ENCODE measurements at regions of chr2 and their contacts with region 1.

Region 1: GRCh38 chr2:96739633-96740428 is at the start of gene LMAN2L:
- DNase-seq: peak; percentile 94 to 99 (median 98)
- H3K4me3 ChIP-seq: peak within 1 kb of the TSS; percentile 63 to 82
- H3K4me3 Mint-ChIP-seq: peak within 1 kb of the TSS; percentile 93 to 100 (median 98)
- H3K27ac ChIP-seq: peak within 1 kb of the TSS; percentile 75
- H3K27ac Mint-ChIP-seq: peak within 1 kb of the TSS; percentile 90 to 98 (median 97)
- H3K4me1 ChIP-seq: peaks cover 36% of the 10 kb centered on the region
- H3K4me1 Mint-ChIP-seq: peaks cover 24 to 53% (median 39%) of the 10 kb centered on the region in 4 donors
- H3K27me3 ChIP-seq: no peaks in the 10 kb centered on the region
- H3K27me3 Mint-ChIP-seq: no peaks in the 10 kb centered on the region
- total RNA-seq, gene LMAN2L: 10.1 to 12.6 TPM

Region 2: DNA sequence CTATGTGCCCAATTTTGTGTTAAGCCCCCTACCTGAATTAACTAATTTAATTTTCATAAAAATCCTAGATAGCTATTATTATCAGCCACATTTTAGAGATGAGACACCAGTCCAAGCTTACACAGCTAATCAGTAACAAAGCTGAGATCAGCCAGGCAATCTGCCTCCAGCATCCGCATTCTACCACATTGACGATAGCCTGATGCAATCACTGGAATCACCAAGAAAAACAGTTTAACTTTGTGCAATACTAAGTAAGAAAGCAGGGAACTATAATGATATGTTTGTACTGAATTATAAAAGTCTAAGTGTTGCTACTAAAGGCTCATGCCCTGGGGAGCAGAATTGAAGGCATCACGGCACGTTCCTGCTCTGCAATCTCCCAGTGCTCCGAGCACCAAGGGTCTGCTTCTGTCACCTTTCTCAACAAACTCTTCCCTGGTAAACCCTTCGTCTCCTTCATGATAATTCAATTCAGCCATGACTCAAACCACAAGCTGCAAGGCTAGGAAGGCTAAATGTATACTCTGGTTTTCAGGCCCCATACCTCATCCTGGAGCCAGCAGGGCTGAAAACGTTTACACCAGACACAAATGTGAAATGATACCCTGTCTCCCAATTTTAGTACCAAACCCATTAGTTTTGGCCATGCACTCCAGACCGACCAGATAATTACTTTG is 121.1 kb before region 1 on chr2:
- CTCF ChIA-PET with region 1: no interaction called
- POLR2A ChIA-PET with region 1: no interaction called
- intact Hi-C with region 1: no loop called
- DNase-seq: no peak
- H3K4me3 ChIP-seq: no peak overlapping the region
- H3K4me3 Mint-ChIP-seq: no peak overlapping the region
- H3K27ac ChIP-seq: no peak overlapping the region
- H3K27ac Mint-ChIP-seq: peak overlapping the region in 3 of 7 donors; percentile 11 to 50 (median 43)
- H3K4me1 ChIP-seq: peaks cover 13% of the 10 kb centered on the region
- H3K4me1 Mint-ChIP-seq: peaks cover 13 to 40% (median 25%) of the 10 kb centered on the region in 4 donors
- H3K27me3 ChIP-seq: no peaks in the 10 kb centered on the region
- H3K27me3 Mint-ChIP-seq: no peaks in the 10 kb centered on the region

Region 3: DNA sequence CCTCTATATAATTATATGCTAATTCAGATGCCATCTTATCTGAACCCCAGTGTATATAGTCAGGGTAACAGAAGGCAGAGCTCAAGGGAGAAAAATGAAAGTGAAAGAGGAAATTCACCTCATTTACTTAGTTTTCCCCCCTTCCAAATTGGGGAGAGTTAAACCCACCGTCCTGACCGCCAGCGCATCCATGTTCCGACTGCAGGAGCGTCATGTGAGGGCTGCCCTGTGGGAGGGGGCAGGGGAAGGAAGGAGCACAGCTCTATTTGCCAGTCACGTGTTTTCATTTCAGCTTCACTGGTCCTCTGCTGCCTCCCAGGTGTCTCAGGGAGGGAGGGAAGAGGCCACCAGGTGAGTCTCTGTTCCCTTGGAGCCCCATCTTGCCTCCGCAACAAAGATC is 34.1 kb after region 1 on chr2:
- CTCF ChIA-PET with region 1: no interaction called
- POLR2A ChIA-PET with region 1: no interaction called
- intact Hi-C with region 1: loop called (anchors 1 kb)
- DNase-seq: peak; percentile 54 to 82 (median 64)
- H3K4me3 ChIP-seq: peak overlapping the region; percentile 63 to 77
- H3K4me3 Mint-ChIP-seq: peak overlapping the region; percentile 91 to 96 (median 92)
- H3K27ac ChIP-seq: peak overlapping the region; percentile 59
- H3K27ac Mint-ChIP-seq: peak overlapping the region; percentile 85 to 97 (median 93)
- H3K4me1 ChIP-seq: peaks cover 18% of the 10 kb centered on the region
- H3K4me1 Mint-ChIP-seq: peaks cover 17 to 35% (median 21%) of the 10 kb centered on the region in 4 donors
- H3K27me3 ChIP-seq: no peaks in the 10 kb centered on the region
- H3K27me3 Mint-ChIP-seq: no peaks in the 10 kb centered on the region

Measured in CD4-positive, alpha-beta memory T cell (primary cell).